AG04449 (cell line): ENCODE measurements at regions of chr18 and their contacts with region 1.

Region 1: DNA sequence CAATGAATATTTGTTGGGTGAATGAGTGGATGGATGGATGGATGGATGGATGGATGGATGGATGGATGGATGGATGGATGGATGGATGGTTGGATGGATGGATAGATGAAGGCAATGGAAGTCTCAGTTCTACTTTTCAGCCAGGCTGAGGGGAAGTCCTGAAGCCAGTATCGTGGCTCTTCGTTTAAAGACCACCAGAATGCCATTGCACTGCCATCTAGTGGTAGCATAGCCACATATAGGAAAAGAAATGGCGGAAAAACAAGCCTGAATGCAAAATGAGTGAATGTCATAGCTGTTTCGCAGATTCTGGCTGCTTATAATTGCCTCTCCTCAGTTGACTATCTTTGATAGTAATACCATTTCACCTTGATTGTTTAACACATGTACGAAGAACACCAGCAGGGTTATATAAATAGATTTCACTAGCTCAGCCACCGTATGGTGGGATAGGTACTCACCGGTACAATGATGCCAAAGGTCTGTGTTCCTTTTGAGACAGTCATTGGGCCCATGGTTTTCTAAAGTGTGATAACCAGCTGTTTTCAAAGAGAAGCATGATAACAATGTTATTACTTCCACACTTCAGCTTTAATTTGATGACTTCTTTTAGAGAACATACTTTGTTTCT is 62.3 kb upstream of the GREB1L start:
- DNase-seq: no peak
- H3K4me3 ChIP-seq: no peak overlapping the region
- CTCF ChIP-seq: peak; percentile 66

Region 2: GRCh38 chr18:20988726-20989125 is 191.0 kb before region 1 on chr18:
- CTCF ChIA-PET with region 1: interaction called, 19 read pairs
- POLR2A ChIA-PET with region 1: no interaction called
- DNase-seq: no peak
- H3K4me3 ChIP-seq: no peak overlapping the region
- CTCF ChIP-seq: no peak

Region 3: DNA sequence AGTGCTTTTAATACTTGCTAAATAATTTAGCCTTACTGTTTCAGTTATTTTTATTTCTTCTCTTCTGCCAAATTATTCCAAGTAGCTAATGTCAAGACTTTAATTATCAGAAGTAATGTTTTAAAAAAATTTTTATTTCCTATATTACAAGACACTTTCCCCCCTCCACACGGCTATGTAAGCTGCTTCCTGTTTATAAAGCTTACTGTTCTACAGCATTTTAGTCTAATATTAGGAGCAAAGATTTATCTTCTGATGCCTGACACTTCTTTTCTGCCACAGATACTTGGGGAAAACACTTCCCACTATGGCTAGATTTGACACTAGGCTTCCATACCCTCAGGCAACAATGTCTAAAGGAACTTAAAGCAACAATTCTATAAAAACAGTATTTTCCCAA is 130.4 kb before region 1 on chr18:
- CTCF ChIA-PET with region 1: interaction called, 20 read pairs
- POLR2A ChIA-PET with region 1: no interaction called
- DNase-seq: no peak
- H3K4me3 ChIP-seq: no peak overlapping the region
- CTCF ChIP-seq: no peak

Region 4: DNA sequence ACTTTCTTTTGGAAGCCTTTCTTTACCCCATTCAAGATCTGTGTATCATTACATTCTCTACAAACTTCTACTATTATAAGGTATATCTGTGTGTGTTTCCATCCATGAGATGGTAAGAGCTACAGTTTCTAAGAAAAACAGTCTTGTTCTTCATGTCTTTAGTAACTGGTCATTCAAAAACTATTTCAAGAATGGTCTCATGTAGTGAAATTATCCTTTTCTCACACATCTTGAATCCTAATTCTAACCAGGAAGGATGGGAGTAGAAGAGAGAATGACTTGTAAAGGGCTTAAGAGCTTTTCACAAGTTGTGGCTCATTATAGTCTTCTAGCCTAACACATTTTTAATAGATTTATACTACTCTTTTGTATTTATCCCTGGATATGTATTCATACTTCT is 115.4 kb before region 1 on chr18:
- CTCF ChIA-PET with region 1: interaction called, 10 read pairs
- POLR2A ChIA-PET with region 1: no interaction called
- DNase-seq: peak; percentile 29
- H3K4me3 ChIP-seq: no peak overlapping the region
- CTCF ChIP-seq: no peak

Region 5: DNA sequence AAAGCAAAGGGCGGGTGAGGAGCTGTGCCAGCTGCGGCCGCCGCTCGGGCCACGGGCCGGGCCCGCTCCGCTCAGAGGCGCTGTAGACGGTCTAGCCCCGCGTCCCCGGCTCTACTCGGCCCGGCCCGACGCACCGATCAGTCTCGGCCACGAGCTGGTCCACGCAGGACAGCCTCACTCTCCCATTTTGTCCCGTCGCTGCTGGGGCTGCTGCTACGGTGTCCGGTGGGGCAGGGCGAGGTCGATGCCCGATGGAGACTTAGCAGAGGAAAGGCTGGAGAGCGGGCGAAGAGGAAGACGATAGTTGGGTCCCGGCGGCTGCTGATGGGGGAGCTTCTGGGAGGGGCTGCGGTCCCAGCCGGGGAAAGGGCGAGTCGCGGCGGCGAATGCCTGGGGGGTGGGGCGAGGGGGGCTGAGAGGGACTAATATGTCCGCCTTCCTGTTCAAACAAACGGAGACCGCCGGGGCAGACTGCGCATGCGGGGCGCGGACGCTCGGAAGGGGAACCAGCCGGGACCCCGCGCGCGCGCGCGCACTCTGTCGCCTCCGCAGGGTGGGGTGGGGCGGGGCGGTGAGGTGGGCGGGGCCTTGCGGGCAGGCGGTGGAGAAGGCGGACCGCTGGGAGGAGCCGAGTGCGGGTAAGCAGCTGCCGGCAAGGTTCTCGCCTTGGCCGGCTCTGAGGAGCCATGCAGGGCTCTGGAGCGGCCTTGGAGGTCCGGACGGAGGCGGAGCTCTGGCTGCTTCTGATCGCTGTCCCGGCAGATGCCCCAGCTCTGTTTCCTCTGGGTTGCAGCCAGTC is 68.2 kb before region 1 on chr18 and contains the start of gene ROCK1:
- CTCF ChIA-PET with region 1: interaction called, 12 read pairs
- POLR2A ChIA-PET with region 1: no interaction called
- DNase-seq: peak; percentile 74
- H3K4me3 ChIP-seq: peak within 1 kb of the TSS; percentile 94
- CTCF ChIP-seq: no peak

Region 6: DNA sequence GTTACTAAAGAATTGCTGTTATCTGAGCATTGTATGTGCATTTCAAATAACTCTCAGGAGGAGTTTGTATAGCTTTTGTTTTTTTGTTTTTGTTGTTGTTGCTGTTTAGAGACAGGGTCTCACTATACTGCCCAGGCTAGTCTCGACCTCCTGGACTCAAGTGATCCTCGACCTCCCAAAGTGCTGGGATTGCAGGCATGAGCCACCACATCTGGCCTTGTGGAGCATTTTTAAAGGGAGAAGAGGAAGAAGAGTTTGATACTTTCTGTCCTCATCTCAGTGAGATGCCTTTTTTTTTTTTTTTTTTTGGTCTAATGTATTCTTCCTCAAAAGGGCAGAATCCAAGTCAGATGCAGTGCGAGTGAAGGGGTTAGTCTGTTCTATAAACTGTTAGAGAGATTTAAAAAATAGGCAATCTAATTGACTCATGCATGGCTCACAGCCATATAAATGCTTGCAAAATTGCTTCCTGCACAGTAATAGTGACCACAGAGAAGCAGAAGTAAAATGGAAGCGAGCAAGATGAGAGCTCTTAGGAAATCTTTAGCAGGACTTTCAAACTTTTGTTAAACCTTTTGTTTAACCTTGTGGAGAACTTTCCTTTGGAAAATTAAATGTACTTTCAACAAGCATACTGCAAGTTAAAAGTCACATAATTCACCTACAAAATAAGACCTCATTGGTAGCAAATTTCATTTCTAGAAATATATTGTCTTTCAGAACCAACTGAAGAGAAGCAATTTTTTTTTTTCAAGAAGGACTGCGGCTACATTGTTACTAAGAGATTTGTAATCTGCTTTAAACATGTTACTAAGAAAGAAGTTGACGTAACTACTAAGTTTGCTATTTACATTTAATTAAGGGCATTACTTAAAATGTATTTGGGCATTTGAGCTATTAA is 15.8 kb before region 1 on chr18:
- CTCF ChIA-PET with region 1: interaction called, 55 read pairs
- POLR2A ChIA-PET with region 1: no interaction called
- DNase-seq: peak; percentile 69
- H3K4me3 ChIP-seq: no peak overlapping the region; the same call in 1 of the 2 replicates
- CTCF ChIP-seq: no peak

Region 7: DNA sequence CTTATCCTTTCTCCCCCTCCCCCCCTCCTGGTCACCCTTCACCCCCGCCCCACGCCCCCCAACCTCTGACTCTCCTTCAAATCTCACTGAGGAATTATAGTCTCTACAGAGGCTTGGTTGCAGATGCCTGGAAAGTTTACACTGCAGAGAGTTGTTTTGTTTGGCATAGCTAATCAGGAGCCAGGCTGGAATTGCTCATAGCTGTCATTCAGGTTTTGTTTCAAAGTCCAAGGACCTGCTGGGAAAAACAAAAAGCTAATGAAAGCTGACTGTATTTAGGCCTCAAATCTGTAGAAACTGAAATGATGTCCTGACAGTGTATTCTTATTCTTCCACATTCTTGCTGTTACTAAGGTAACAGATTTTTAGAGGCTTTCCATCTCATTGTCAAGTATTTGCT is 84.9 kb after region 1 on chr18:
- CTCF ChIA-PET with region 1: no interaction called
- POLR2A ChIA-PET with region 1: no interaction called
- DNase-seq: no peak
- H3K4me3 ChIP-seq: no peak overlapping the region
- CTCF ChIP-seq: no peak

Region 8: GRCh38 chr18:21526463-21526862 is 346.8 kb after region 1 on chr18:
- CTCF ChIA-PET with region 1: no interaction called
- POLR2A ChIA-PET with region 1: no interaction called
- DNase-seq: no peak
- H3K4me3 ChIP-seq: no peak overlapping the region
- CTCF ChIP-seq: no peak